ENCODE measurements at regions of chr3 and their contacts with region 1.

Region 1: GRCh38 chr3:185677146-185677829 is 91.2 kb downstream of the SENP2 start:
- DNase-seq: peak; percentile 57 to 68 (median 62)
- ATAC-seq: peak; percentile 92
- H3K4me3 ChIP-seq: no peak overlapping the region
- H3K27ac ChIP-seq: no peak overlapping the region
- H3K4me1 ChIP-seq: no peaks in the 10 kb centered on the region
- H3K27me3 ChIP-seq: no peaks in the 10 kb centered on the region
- CTCF ChIP-seq: peak; percentile 53 to 58 (median 55)
- EP300 ChIP-seq: no peak
- POLR2A ChIP-seq: no peak
- RAD21 ChIP-seq: peak; percentile 35 to 76; a peak in 3 of 4 replicates

Region 2: DNA sequence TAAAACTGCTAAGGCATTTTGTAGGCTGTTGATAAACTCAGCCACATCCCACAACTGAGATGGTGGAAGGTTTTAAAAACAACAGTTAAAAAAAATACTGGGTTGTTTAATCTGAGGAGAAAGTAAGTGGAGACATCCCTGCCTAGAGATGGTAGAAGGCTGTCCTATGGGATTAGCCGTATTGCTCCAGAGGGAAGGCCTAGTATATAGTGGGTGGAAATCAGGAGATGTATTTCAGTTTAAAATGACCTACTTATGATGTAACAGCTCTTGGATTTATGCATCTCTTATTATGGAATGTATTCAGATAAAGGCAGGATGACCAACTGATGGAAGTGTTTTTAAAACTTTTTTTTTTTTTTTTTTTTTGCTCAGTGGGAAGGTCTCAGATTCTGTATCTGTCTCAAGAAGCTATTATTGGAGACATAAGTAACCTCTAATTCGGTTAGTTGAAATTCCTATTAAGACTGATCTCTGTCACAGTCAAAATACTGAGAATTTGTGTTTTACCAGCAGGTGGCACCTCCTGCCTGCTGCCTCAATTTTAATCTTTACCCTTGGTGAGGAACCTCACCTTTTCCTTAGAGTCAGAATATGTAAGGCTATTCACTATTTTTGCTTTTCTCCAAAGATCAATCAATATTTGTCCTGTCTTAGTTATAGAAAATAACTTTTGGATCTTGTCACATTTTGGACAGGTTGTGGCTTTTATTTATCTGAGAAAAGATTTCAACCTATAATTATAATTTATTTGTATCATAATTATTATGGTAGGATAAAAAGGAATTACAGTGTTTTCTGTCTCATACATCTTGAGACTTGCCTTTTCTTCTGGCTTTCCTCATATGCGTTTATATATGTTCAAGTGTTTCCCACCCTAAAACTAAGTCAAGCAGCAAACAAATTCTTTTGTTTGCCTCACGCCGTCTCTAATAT is 802.3 kb before region 1 on chr3:
- CTCF ChIA-PET with region 1: no interaction called
- POLR2A ChIA-PET with region 1: no interaction called
- in situ Hi-C with region 1: no loop called
- intact Hi-C with region 1: no loop called
- DNase-seq: peak; percentile 17 to 50 (median 34)
- ATAC-seq: peak; percentile 78
- H3K4me3 ChIP-seq: no peak overlapping the region
- H3K27ac ChIP-seq: no peak overlapping the region
- H3K4me1 ChIP-seq: no peaks in the 10 kb centered on the region
- H3K27me3 ChIP-seq: no peaks in the 10 kb centered on the region
- CTCF ChIP-seq: peak; percentile 62 to 86 (median 64); a peak in 5 of 6 replicates
- EP300 ChIP-seq: no peak
- POLR2A ChIP-seq: no peak
- RAD21 ChIP-seq: peak; percentile 85 to 93

Region 3: DNA sequence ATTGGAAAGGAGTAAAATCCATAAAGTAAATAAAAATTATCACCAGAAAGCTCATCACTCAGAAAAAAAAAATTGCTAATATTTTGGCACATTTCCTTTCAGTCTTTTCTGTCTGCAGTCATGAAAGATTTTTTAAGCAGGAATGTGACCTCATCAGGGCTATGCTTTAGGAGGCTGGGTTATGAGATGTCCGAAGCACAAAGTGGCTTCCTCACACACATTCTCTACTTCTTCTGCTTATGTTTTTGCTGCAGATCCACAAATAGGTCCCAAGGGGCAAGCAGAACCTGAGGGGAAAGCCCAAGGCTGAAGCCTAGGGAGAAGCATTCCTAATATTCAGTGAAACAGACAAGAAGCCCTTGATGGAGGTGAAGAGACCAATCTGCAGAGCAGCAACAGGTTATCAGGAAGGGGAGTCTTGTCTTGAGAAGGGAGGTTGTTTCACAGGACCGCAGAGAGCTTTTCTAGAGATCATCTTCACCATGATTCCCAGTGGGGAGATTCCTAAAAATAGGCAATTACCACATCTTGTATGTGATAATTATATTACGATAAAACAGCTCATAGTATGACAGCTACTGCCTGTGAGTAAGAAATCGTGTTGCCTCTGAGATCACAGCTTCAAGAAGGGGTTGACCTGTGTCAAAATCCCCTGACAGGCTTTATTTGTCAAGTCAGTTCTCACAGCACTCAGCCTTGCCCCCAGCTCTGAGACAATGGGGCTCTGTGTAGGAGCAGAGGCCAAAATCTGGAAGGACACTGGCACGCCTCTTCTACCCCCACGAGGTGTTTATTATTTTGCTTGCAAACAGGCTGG is 87.1 kb after region 1 on chr3:
- CTCF ChIA-PET with region 1: no interaction called
- POLR2A ChIA-PET with region 1: interaction called, 3 read pairs
- in situ Hi-C with region 1: no loop called
- intact Hi-C with region 1: loop called (anchors 5 kb)
- DNase-seq: no peak
- ATAC-seq: peak; percentile 23
- H3K4me3 ChIP-seq: no peak overlapping the region
- H3K27ac ChIP-seq: no peak overlapping the region
- H3K4me1 ChIP-seq: peaks cover 4 to 34% of the 10 kb centered on the region in 2 experiments; a peak in 4 of 5 replicates
- H3K27me3 ChIP-seq: no peaks in the 10 kb centered on the region; a peak in 1 of 5 replicates
- CTCF ChIP-seq: no peak
- EP300 ChIP-seq: no peak
- POLR2A ChIP-seq: no peak
- RAD21 ChIP-seq: no peak

Region 4: GRCh38 chr3:186598108-186598784 is 921.0 kb after region 1 on chr3:
- CTCF ChIA-PET with region 1: no interaction called
- POLR2A ChIA-PET with region 1: no interaction called
- in situ Hi-C with region 1: no loop called
- intact Hi-C with region 1: no loop called
- DNase-seq: no peak
- ATAC-seq: no peak
- H3K4me3 ChIP-seq: no peak overlapping the region
- H3K27ac ChIP-seq: no peak overlapping the region
- H3K4me1 ChIP-seq: peaks cover 6 to 14% of the 10 kb centered on the region in 2 experiments
- H3K27me3 ChIP-seq: no peaks in the 10 kb centered on the region
- CTCF ChIP-seq: no peak
- EP300 ChIP-seq: no peak
- POLR2A ChIP-seq: no peak
- RAD21 ChIP-seq: no peak

Measured in K562 (cell line).